ENCODE measurements at regions of chr11 and their contacts with region 1.

Region 1: DNA sequence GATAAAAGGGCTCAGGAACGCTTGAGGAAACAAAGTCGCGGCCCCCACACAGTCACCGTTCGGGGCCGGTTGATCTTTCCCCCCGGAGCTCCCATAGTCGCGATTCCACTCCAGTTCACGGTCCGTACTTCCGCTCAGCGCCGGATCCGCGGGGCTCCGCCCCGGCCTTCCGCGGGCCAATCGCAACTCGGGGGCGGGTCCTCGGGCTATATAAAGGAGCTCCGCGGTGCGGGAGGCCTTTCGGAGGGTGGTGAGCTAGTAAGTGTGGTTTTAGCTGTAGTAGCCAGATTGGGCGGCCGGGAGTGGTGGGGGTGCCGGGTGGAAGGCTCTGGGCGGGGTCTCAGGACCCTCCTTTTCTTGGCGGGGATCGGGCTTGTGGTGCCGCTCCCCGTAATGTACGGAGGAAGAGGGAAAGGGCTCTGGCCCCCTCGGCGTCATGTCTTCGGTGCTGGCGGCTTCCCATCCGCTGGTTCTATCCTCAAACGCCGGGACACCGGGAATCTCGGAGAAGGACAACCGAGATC is at the starts of genes C11orf98 and CSKMT:
- DNase-seq: peak; percentile 94 to 96 (median 95)
- H3K4me3 ChIP-seq: peak within 1 kb of the TSS; percentile 88 to 97
- H3K4me3 Mint-ChIP-seq: peak within 1 kb of the TSS; percentile 92 to 98 (median 96)
- H3K27ac ChIP-seq: peak within 1 kb of the TSS; percentile 73
- H3K27ac Mint-ChIP-seq: peak within 1 kb of the TSS; percentile 95 to 98 (median 96)
- H3K4me1 ChIP-seq: peaks cover 42% of the 10 kb centered on the region
- H3K4me1 Mint-ChIP-seq: peaks cover 15 to 55% (median 31%) of the 10 kb centered on the region in 4 donors
- H3K27me3 ChIP-seq: no peaks in the 10 kb centered on the region
- H3K27me3 Mint-ChIP-seq: no peaks in the 10 kb centered on the region
- total RNA-seq, gene C11orf98: 48.9 to 53.1 TPM
- total RNA-seq, gene CSKMT: 31.4 to 32.3 TPM

Region 2: DNA sequence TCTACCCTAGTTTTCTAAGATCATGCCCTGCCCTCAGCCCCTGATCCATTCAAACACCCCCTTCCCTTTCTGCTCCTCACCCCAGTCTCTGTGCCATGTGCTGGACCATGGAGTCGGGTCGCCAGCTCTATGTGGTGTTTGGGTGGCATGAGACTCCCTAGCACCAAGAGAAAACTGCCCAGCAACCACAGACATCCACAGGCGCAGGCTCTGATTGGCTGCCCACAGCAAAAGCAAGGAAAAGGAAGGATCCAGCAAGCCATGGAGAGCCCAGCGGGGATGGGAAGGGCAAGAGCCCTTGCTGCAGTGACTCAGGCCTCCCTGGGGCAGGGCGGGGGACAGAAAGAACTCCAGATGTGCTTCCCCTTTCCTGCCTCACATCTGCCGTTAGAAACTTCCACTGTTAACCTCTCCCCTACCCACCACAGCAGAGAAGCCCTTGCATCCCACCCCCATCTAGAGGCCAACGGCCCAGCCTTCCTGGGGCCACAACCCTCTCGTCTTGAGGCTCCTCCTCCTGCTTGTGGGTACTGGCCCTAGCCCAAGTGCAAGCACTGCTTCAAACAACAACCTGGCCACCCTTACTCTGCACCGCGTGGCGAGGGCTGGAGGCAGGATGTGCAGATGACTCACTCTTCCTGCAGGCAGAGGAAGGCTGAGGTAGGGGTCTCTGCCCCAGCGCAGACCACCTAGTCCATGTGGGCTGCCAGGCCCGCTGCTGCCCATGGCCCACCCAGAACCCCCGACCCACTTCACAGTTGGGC is 108.8 kb before region 1 on chr11:
- CTCF ChIA-PET with region 1: interaction called, 3 read pairs
- POLR2A ChIA-PET with region 1: interaction called, 22 read pairs
- intact Hi-C with region 1: no loop called
- DNase-seq: peak; percentile 85 to 97 (median 87)
- H3K4me3 ChIP-seq: peak overlapping the region; percentile 37 to 75
- H3K4me3 Mint-ChIP-seq: peak overlapping the region; percentile 82 to 91 (median 90)
- H3K27ac ChIP-seq: peak overlapping the region; percentile 95
- H3K27ac Mint-ChIP-seq: peak overlapping the region; percentile 98 to 100 (median 100)
- H3K4me1 ChIP-seq: peaks cover 98% of the 10 kb centered on the region
- H3K4me1 Mint-ChIP-seq: peaks cover 73 to 97% (median 85%) of the 10 kb centered on the region in 4 donors
- H3K27me3 ChIP-seq: no peaks in the 10 kb centered on the region
- H3K27me3 Mint-ChIP-seq: peaks cover 0 to 2% of the 10 kb centered on the region in 2 donors

Region 3: DNA sequence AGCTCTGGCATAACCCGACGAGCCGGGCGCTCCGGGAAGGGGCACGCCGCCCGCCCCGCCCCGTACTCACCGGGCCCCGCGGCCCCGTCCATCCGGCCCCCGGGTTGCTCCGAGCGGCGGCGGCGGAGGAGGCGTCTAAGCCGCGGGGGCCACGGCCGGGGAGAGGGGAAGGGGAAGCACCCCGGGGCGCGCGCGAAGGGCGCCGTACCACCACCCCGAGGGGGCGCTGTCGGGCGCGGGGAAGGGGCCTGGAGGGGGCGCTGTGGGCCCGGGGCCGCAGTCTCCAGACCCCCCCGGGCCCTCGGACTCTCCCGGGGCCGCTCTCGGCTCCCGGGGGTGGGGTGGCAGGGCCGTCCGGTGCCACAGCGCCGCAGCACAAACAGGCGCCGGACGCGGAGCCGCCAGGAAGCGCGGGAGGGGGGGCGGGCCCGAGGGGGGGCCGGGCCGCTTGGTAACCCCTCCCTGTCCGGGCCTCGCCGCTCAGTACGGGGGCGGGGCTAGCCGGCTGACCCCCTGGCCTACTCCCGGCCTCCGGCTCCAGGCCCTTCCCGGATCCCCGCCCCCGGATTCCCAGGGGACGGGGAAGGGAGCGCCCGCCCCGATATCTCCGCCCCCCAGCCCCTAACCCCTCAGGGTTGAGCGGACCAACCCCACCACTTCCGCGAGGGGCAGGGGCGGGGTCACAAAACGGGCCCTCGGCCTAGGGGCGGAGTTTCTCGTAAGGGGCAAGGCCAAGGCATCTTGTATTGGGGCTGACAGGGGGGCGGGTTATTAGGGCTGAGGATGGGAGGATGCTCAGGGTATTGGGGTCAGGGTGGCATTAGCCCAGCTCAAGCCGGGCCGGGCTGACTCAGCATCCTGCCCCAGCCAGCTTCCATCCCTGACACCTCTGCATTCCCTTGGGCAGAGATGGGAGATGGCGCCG is 52.5 kb before region 1 on chr11 and contains the starts of genes EML3 and ROM1:
- CTCF ChIA-PET with region 1: interaction called, 6 read pairs
- POLR2A ChIA-PET with region 1: interaction called, 56 read pairs
- intact Hi-C with region 1: loop called (anchors 1 kb)
- DNase-seq: peak; percentile 85 to 88 (median 86)
- H3K4me3 ChIP-seq: peak within 1 kb of the TSS; percentile 73 to 93
- H3K4me3 Mint-ChIP-seq: peak within 1 kb of the TSS; percentile 89 to 100 (median 96)
- H3K27ac ChIP-seq: peak within 1 kb of the TSS; percentile 90
- H3K27ac Mint-ChIP-seq: peak within 1 kb of the TSS; percentile 94 to 98 (median 96)
- H3K4me1 ChIP-seq: peaks cover 59% of the 10 kb centered on the region
- H3K4me1 Mint-ChIP-seq: peaks cover 15 to 53% (median 38%) of the 10 kb centered on the region in 4 donors
- H3K27me3 ChIP-seq: no peaks in the 10 kb centered on the region
- H3K27me3 Mint-ChIP-seq: no peaks in the 10 kb centered on the region
- total RNA-seq, gene EML3: 192 to 201 TPM
- total RNA-seq, gene ROM1: 1.6 to 1.9 TPM

Region 4: GRCh38 chr11:62645956-62646824 is 18.9 kb before region 1 on chr11 and contains the start of gene GANAB:
- CTCF ChIA-PET with region 1: interaction called, 5 read pairs
- POLR2A ChIA-PET with region 1: interaction called, 162 read pairs
- intact Hi-C with region 1: loop called (anchors 2 kb)
- DNase-seq: peak; percentile 95 to 99 (median 97)
- H3K4me3 ChIP-seq: peak within 1 kb of the TSS; percentile 55 to 76
- H3K4me3 Mint-ChIP-seq: peak within 1 kb of the TSS; percentile 93 to 99 (median 95)
- H3K27ac ChIP-seq: peak within 1 kb of the TSS; percentile 92
- H3K27ac Mint-ChIP-seq: peak within 1 kb of the TSS; percentile 84 to 99 (median 97)
- H3K4me1 ChIP-seq: peaks cover 37% of the 10 kb centered on the region
- H3K4me1 Mint-ChIP-seq: peaks cover 14 to 48% (median 26%) of the 10 kb centered on the region in 4 donors
- H3K27me3 ChIP-seq: no peaks in the 10 kb centered on the region
- H3K27me3 Mint-ChIP-seq: no peaks in the 10 kb centered on the region
- total RNA-seq, gene GANAB: 260 to 262 TPM

Region 5: GRCh38 chr11:62694455-62695167 is 29.5 kb after region 1 on chr11:
- CTCF ChIA-PET with region 1: interaction called, 10 read pairs
- POLR2A ChIA-PET with region 1: interaction called, 16 read pairs
- intact Hi-C with region 1: no loop called
- DNase-seq: peak; percentile 73 to 80 (median 74)
- H3K4me3 ChIP-seq: no peak overlapping the region
- H3K4me3 Mint-ChIP-seq: no peak overlapping the region
- H3K27ac ChIP-seq: no peak overlapping the region
- H3K27ac Mint-ChIP-seq: peak overlapping the region in 4 of 7 donors; percentile 7 to 77 (median 56)
- H3K4me1 ChIP-seq: no peaks in the 10 kb centered on the region
- H3K4me1 Mint-ChIP-seq: peaks cover 5 to 7% (median 6%) of the 10 kb centered on the region in 4 donors
- H3K27me3 ChIP-seq: no peaks in the 10 kb centered on the region
- H3K27me3 Mint-ChIP-seq: no peaks in the 10 kb centered on the region

Region 6: DNA sequence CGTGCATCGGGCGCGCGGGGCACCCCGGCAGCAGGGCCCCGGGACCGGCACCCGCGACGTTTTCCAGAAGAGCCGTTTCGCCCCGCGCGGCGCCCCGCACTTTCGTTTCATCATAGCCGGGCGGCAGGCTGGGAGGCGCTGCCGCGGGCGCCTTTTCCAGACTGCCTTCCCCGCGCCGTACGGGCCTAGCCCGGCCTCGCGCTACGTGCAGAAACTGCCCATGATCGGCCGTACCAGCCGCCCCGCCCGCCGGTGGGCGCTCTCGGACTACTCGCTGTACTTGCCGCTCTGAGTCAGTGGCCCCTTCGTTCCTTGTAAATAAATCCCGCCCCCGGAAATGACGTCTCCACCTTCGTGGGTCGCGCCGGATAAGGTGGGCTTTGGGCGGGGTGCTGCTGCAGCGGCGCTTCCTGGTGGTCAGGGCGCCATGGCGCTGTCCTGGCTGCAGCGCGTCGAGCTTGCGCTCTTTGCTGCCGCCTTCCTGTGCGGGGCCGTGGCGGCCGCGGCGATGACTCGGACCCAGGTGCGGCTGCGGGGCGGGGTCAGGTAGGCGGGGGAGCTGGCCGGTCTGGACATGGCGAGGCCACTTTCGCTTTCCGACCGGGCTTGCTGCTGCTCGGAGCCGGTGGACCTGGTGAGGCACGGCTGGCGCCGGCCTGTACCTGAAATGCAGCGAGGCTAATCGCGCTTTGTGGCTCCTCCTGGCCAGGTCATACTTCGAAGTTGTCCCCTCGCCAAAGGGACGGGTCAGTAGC is 122.0 kb after region 1 on chr11 and contains the start of gene TMEM179B:
- CTCF ChIA-PET with region 1: interaction called, 7 read pairs
- POLR2A ChIA-PET with region 1: interaction called, 15 read pairs
- intact Hi-C with region 1: no loop called
- DNase-seq: peak; percentile 95 to 99 (median 96)
- H3K4me3 ChIP-seq: peak within 1 kb of the TSS; percentile 73 to 95
- H3K4me3 Mint-ChIP-seq: peak within 1 kb of the TSS; percentile 93 to 97 (median 96)
- H3K27ac ChIP-seq: peak within 1 kb of the TSS; percentile 84
- H3K27ac Mint-ChIP-seq: peak within 1 kb of the TSS; percentile 89 to 98 (median 97)
- H3K4me1 ChIP-seq: peaks cover 45% of the 10 kb centered on the region
- H3K4me1 Mint-ChIP-seq: peaks cover 29 to 61% (median 47%) of the 10 kb centered on the region in 4 donors
- H3K27me3 ChIP-seq: no peaks in the 10 kb centered on the region
- H3K27me3 Mint-ChIP-seq: no peaks in the 10 kb centered on the region
- total RNA-seq, gene TMEM179B: 66.3 to 66.6 TPM

Region 7: DNA sequence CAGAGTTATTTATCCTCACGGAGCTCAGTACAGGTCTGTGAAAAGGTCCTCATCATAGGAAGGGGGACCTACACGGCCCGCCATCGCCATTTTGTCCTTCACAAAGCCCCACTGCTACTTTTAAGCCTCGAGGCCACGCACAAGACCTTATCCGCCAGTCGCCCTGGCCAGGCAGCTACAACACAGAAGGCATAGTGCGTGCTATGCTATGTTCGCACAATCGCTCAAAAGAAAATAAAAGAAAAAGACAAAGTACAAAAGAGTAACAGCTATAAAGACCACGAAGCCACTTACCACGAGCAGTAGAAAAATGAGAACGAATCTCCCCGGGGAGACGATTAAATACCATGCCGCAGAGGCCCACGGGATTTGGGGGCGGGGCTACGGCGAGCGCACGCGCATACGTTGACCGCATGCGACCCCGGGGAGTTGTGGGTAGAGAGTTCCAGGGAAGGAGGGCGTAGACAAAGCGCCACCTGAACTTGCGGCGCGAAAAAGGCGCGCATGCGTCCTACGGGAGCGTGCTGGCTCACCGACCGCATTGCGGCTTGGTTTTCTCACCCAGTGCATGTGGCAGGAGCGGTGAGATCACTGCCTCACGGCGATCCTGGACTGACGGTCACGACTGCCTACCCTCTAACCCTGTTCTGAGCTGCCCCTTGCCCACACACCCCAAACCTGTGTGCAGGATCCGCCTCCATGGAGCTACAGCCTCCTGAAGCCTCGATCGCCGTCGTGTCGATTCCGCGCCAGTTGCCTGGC is 190.6 kb after region 1 on chr11:
- CTCF ChIA-PET with region 1: no interaction called
- POLR2A ChIA-PET with region 1: interaction called, 31 read pairs
- intact Hi-C with region 1: no loop called
- DNase-seq: peak; percentile 98 to 99 (median 99)
- H3K4me3 ChIP-seq: peak overlapping the region; percentile 89 to 91
- H3K4me3 Mint-ChIP-seq: peak overlapping the region; percentile 95 to 99 (median 96)
- H3K27ac ChIP-seq: peak overlapping the region; percentile 78
- H3K27ac Mint-ChIP-seq: peak overlapping the region; percentile 93 to 98 (median 95)
- H3K4me1 ChIP-seq: peaks cover 57% of the 10 kb centered on the region
- H3K4me1 Mint-ChIP-seq: peaks cover 41 to 67% (median 55%) of the 10 kb centered on the region in 4 donors
- H3K27me3 ChIP-seq: no peaks in the 10 kb centered on the region
- H3K27me3 Mint-ChIP-seq: no peaks in the 10 kb centered on the region

Region 8: GRCh38 chr11:62922658-62923431 is 257.7 kb after region 1 on chr11:
- CTCF ChIA-PET with region 1: no interaction called
- POLR2A ChIA-PET with region 1: no interaction called
- intact Hi-C with region 1: no loop called
- DNase-seq: peak in 1 of 5 donors; percentile 45
- H3K4me3 ChIP-seq: no peak overlapping the region
- H3K4me3 Mint-ChIP-seq: peak overlapping the region in 7 of 8 donors; percentile 64 to 83 (median 77)
- H3K27ac ChIP-seq: no peak overlapping the region
- H3K27ac Mint-ChIP-seq: peak overlapping the region in 1 of 7 donors; percentile 84
- H3K4me1 ChIP-seq: peaks cover 38% of the 10 kb centered on the region
- H3K4me1 Mint-ChIP-seq: peaks cover 11 to 45% (median 24%) of the 10 kb centered on the region in 4 donors
- H3K27me3 ChIP-seq: peaks cover 17% of the 10 kb centered on the region
- H3K27me3 Mint-ChIP-seq: peaks cover 37 to 54% of the 10 kb centered on the region in 2 donors